ENCODE measurements at regions of chr17 and their contacts with region 1.

Region 1: GRCh38 chr17:73429440-73430164 is 117.8 kb upstream of the CDC42EP4 start:
- DNase-seq: no peak
- H3K4me3 ChIP-seq: no peak overlapping the region
- CTCF ChIP-seq: peak; percentile 98

Region 2: GRCh38 chr17:73410586-73411312 is 18.9 kb before region 1 on chr17:
- CTCF ChIA-PET with region 1: interaction called, 12 read pairs
- POLR2A ChIA-PET with region 1: no interaction called
- DNase-seq: no peak
- H3K4me3 ChIP-seq: no peak overlapping the region
- CTCF ChIP-seq: no peak

Region 3: GRCh38 chr17:73444021-73444420 is 14.4 kb after region 1 on chr17:
- CTCF ChIA-PET with region 1: interaction called, 22 read pairs
- POLR2A ChIA-PET with region 1: no interaction called
- DNase-seq: no peak
- H3K4me3 ChIP-seq: no peak overlapping the region
- CTCF ChIP-seq: no peak

Region 4: DNA sequence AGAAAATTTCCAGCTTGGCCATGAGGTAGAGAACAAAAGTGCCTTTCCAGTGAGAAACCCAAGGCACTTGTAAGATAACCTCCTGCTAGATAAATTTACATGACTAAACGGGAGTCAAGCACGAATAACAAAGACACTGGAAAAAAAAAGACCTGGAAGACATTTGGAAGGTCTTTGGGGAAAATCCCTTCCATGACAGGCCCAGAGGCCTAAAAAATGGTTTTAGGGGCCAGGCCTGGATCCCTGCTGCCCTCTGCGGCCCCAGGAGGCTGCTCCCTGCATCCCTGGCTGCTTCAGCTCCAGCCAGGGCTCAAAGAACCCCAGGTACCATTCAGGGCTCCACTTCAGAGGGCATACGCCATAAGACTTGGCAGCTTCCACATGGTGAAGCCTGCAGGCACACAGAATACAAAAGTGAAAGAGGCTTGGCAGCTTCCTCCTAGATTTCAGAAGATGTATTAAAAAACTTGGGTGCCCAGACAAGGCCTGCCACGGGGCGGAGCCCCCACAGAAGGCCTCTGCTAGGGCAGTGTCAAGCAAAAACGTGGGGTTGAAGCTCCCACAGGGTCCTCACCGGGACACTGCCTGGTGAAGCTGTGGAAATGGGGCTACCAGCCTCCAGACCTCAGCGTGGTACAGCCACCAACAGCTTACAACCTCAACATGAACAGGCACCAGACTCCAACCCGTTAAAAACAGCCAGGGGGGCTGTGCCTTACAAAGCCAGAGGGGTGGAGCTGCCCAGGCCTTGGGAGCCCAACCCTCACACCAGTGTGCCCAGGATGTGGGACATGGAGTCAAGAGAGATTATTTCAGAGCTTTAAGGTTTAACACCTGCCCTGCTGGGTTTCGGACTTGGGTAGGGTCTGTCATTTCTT is 137.5 kb after region 1 on chr17:
- CTCF ChIA-PET with region 1: no interaction called
- POLR2A ChIA-PET with region 1: no interaction called
- DNase-seq: no peak
- H3K4me3 ChIP-seq: no peak overlapping the region
- CTCF ChIP-seq: no peak

Region 5: GRCh38 chr17:73625991-73626673 is 196.5 kb after region 1 on chr17:
- CTCF ChIA-PET with region 1: no interaction called
- POLR2A ChIA-PET with region 1: no interaction called
- DNase-seq: no peak
- H3K4me3 ChIP-seq: no peak overlapping the region
- CTCF ChIP-seq: no peak

Region 6: GRCh38 chr17:73710095-73710592 is 280.5 kb after region 1 on chr17:
- CTCF ChIA-PET with region 1: interaction called, 37 read pairs
- POLR2A ChIA-PET with region 1: no interaction called
- DNase-seq: no peak
- H3K4me3 ChIP-seq: no peak overlapping the region
- CTCF ChIP-seq: peak; percentile 50

Region 7: GRCh38 chr17:74176546-74177001 is 747.0 kb after region 1 on chr17:
- CTCF ChIA-PET with region 1: interaction called, 53 read pairs
- POLR2A ChIA-PET with region 1: no interaction called
- DNase-seq: no peak
- H3K4me3 ChIP-seq: no peak overlapping the region
- CTCF ChIP-seq: peak; percentile 93

Region 8: GRCh38 chr17:74203439-74204240 is 774.0 kb after region 1 on chr17 and contains the start of gene RPL38:
- CTCF ChIA-PET with region 1: interaction called, 21 read pairs
- POLR2A ChIA-PET with region 1: no interaction called
- DNase-seq: peak; percentile 85
- H3K4me3 ChIP-seq: peak within 1 kb of the TSS; percentile 97
- CTCF ChIP-seq: peak; percentile 99